ENCODE measurements at regions of chr15 and their contacts with region 1.

Region 1: DNA sequence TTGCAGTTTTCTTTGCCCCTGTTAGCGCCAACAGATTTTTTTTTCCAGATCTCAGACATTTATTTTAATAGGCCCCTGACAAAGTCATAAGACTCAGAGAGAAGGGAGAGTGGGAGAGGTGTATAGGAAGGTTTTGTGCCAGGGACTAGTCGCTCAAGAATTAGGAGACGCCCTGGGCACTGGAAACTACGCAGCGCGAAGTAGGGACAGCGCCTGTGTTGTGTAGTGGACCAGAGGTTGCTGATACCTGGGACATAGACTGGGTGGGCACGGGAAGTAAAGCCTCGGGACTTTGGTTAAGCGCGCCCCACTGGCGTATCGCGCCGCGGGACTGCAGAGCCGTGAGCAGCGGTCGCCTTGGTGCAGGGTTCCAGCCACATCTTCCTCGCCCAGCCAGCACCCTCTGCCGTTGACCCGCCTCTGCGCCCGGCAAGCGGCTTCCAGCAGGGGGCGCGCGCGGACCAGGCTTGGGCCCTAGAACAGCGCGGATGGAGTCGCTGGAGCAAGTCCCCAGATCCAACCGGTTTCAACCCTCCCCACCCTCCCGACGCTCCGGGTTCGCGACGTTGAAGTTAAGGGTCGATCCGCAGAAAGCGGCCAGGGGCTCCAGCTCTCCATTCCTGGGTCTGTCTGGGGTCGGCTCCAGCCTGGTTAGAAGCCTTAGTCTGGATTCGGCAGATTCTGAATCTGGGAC is 3.0 kb upstream of the ISLR2 start:
- DNase-seq: peak; percentile 55
- H3K4me3 ChIP-seq: peak overlapping the region; percentile 41
- H3K27ac ChIP-seq: no peak overlapping the region
- H3K27me3 ChIP-seq: peaks cover 87% of the 10 kb centered on the region
- CTCF ChIP-seq: peak; percentile 95

Region 2: GRCh38 chr15:74220475-74221248 is 93.3 kb after region 1 on chr15:
- CTCF ChIA-PET with region 1: no interaction called
- POLR2A ChIA-PET with region 1: interaction called, 10 read pairs
- DNase-seq: no peak
- H3K4me3 ChIP-seq: no peak overlapping the region
- H3K27ac ChIP-seq: no peak overlapping the region
- H3K27me3 ChIP-seq: peaks cover 57% of the 10 kb centered on the region
- CTCF ChIP-seq: no peak

Region 3: DNA sequence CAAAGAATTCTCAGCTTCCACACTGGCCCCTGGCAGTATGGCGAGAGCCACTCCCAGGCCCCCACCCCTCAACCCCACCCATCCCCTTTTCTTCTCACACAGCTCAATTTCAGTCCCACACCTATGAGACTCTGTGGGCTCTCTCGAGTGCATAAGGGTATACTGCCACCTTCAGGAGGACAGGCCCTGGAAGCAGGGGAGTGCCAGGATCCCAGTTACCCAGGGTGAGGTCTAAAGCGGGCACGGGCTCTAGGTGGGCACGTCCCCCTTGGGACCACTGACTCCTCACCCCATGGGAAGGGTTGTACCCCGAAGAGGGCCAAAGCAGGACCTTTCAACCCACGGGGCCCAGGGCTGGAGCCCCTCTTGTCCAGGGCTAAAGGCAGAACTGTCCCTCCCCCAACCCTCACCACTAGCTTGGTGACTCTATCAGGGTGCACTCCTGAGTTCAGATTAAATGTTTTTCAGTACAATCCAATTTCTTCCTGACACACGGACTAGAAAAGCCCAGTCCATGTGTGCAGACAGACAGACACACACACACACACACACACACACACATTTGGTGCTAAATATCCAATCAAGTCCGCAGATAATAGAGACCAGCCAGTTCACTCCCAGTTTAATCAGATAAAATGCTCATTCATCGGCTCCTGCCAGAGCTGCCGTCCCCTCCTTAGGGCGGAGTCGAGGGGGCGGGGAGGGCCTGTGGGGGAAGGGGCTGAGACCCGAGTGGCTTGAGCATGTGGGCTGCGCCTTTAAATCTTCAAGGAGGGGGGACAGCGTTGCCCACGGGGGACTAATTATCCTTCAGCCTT is 180.6 kb after region 1 on chr15:
- CTCF ChIA-PET with region 1: interaction called, 58 read pairs
- POLR2A ChIA-PET with region 1: no interaction called
- DNase-seq: no peak
- H3K4me3 ChIP-seq: no peak overlapping the region
- H3K27ac ChIP-seq: no peak overlapping the region
- H3K27me3 ChIP-seq: peaks cover 78% of the 10 kb centered on the region
- CTCF ChIP-seq: peak; percentile 82

Measured in AG04450 (cell line).